MCF 10A (cell line): ENCODE measurements at regions of chr6 and their contacts with region 1.

Region 1: DNA sequence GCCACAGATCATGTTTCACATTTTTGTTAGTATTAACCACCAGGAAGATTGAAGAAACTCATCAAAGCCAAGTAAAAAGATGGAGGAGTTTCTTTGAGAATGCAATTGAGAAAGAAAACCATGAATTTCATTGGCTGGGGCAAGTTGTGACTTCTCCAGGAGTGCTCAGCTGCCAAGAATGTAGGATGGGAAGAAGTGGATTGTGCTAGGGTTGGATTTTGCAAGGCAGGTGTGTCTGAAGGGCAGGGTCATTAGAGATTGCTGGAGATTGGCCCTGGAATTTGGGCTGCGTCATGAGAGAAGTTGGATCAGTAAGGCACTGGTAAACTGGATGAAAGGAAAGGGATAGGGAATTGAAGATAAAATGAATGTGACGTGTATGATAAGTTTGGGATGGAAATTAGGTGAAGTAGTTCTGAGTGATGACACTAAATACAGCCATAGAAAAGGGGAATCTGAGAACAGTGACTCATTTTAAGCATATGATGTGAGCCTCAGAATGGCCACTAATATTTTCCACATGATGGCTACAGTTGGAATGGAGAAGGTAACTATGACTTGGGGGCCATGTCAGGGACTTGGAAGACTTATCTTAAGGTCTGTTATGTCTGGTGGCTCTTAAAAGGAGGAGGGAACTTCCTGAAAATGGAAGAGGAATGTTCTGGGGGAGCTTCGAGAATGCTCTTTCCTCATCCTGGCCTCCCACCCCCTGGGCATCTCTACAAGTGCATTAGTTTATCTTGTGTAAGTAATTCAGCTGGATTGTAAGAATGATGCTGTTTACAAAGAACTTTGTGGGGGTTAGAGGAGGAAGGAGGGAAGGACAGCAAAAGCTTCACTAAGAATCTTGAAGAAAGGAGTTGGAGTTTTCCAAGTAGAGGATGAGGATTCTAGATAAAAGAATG is 27.8 kb upstream of the ERVFRD-1 start:
- DNase-seq: peak; percentile 94
- H3K4me3 Mint-ChIP-seq: peak overlapping the region; percentile 2
- H3K27ac Mint-ChIP-seq: peak overlapping the region; percentile 77
- H3K4me1 Mint-ChIP-seq: peaks cover 41% of the 10 kb centered on the region
- H3K27me3 Mint-ChIP-seq: no peaks in the 10 kb centered on the region
- CTCF ChIP-seq: no peak

Region 2: GRCh38 chr6:11126876-11127275 is 12.4 kb before region 1 on chr6:
- CTCF ChIA-PET with region 1: interaction called, 6 read pairs
- POLR2A ChIA-PET with region 1: interaction called, 10 read pairs
- intact Hi-C with region 1: no loop called
- DNase-seq: peak; percentile 23
- H3K4me3 Mint-ChIP-seq: no peak overlapping the region
- H3K27ac Mint-ChIP-seq: peak overlapping the region; percentile 73
- H3K4me1 Mint-ChIP-seq: peaks cover 38% of the 10 kb centered on the region
- H3K27me3 Mint-ChIP-seq: no peaks in the 10 kb centered on the region
- CTCF ChIP-seq: no peak

Region 3: GRCh38 chr6:11317885-11318771 is 178.8 kb after region 1 on chr6:
- CTCF ChIA-PET with region 1: interaction called, 5 read pairs
- POLR2A ChIA-PET with region 1: no interaction called
- intact Hi-C with region 1: loop called (anchors 1 kb)
- DNase-seq: peak; percentile 95
- H3K4me3 Mint-ChIP-seq: no peak overlapping the region
- H3K27ac Mint-ChIP-seq: peak overlapping the region; percentile 4
- H3K4me1 Mint-ChIP-seq: peaks cover 33% of the 10 kb centered on the region
- H3K27me3 Mint-ChIP-seq: no peaks in the 10 kb centered on the region
- CTCF ChIP-seq: no peak